GM12878 (cell line): ENCODE measurements at regions of chr15 and their contacts with region 1.

Region 1: GRCh38 chr15:91271565-91272153 is 171.6 kb downstream of the SV2B start:
- DNase-seq: peak; percentile 19
- ATAC-seq: peak; percentile 88
- H3K4me3 ChIP-seq: no peak overlapping the region
- H3K27ac ChIP-seq: no peak overlapping the region
- H3K4me1 ChIP-seq: no peaks in the 10 kb centered on the region
- H3K27me3 ChIP-seq: no peaks in the 10 kb centered on the region; a peak in 1 of 4 replicates
- CTCF ChIP-seq: peak; percentile 70 to 86 (median 72)
- EP300 ChIP-seq: no peak
- POLR2A ChIP-seq: no peak
- RAD21 ChIP-seq: peak; percentile 94

Region 2: DNA sequence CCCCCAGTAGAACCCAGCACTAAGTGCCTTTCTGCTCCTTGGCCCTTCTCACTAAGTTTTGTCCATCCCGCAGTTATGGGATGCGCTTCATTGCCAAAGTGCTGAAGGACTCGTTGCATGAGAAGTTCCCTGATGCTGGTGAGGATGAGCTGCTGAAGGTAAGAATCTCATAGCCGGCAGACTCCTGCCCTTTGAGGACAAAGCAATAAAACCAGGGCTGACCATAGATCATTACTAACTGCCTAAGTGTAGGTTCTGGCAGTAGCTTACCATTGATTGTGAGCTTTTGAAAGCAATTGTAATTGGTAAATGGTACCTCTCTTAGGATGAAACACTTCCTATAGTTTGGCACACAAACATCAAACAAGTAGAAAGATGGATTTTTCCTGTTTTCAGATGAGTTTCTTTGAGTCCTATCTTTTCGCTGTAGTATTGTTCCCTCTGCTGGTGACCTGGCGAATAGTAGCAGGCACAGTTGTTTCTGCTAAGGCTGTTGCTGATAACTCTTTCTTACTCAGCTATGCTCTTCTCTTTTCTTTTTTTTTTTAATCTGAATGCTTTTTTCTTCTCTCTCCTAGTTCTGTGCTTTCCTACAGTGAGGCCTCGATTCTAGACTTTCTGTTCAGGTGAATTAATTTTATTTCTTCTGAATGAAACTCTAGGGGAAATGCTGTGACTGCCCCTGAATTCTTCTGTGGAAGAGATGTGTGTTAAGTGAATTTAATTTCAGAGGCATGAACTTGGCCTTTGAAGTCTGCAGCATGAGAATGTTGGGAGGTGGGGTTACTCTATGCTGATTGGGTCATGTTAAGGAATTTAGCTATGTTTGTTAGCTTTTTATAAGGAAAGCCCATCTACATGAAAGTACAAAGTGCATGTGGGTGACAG is 789.3 kb before region 1 on chr15:
- CTCF ChIA-PET with region 1: no interaction called
- POLR2A ChIA-PET with region 1: no interaction called
- RAD21 ChIA-PET with region 1: no interaction called
- SMC1A ChIA-PET with region 1: no interaction called
- in situ Hi-C with region 1: no loop called
- intact Hi-C with region 1: loop called (anchors 10 kb)
- DNase-seq: no peak
- ATAC-seq: peak; percentile 69
- H3K4me3 ChIP-seq: no peak overlapping the region
- H3K27ac ChIP-seq: no peak overlapping the region
- H3K4me1 ChIP-seq: no peaks in the 10 kb centered on the region
- H3K27me3 ChIP-seq: no peaks in the 10 kb centered on the region
- CTCF ChIP-seq: peak; percentile 52 to 66 (median 53); a peak in 4 of 6 replicates
- EP300 ChIP-seq: no peak
- POLR2A ChIP-seq: no peak
- RAD21 ChIP-seq: peak; percentile 82

Region 3: DNA sequence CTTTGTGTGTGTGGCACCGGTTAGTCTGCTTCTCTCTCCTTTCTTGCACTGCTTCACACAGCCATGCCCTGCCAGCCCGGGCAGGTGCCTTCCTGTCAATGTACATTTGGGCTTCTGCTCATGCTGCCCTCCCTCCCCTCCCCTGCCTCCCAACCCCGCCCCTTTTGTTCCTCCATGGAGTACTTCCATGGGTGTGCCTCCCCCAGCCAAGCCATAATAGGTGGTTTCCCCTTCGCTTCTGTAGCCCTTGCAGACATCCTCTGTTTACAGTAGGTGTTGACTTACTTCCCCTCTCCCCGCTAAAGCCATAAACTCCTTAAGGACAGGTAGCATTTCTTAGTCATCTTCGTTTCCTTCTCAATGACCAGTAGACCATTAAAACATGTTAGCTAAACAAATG is 773.7 kb before region 1 on chr15:
- CTCF ChIA-PET with region 1: no interaction called
- POLR2A ChIA-PET with region 1: no interaction called
- RAD21 ChIA-PET with region 1: no interaction called
- SMC1A ChIA-PET with region 1: no interaction called
- in situ Hi-C with region 1: no loop called
- intact Hi-C with region 1: no loop called
- DNase-seq: no peak
- ATAC-seq: no peak
- H3K4me3 ChIP-seq: no peak overlapping the region
- H3K27ac ChIP-seq: no peak overlapping the region
- H3K4me1 ChIP-seq: no peaks in the 10 kb centered on the region
- H3K27me3 ChIP-seq: no peaks in the 10 kb centered on the region
- CTCF ChIP-seq: no peak
- EP300 ChIP-seq: no peak
- POLR2A ChIP-seq: no peak
- RAD21 ChIP-seq: no peak

Region 4: GRCh38 chr15:90982135-90982534 is 289.5 kb before region 1 on chr15:
- CTCF ChIA-PET with region 1: interaction called, 7 read pairs
- POLR2A ChIA-PET with region 1: no interaction called
- RAD21 ChIA-PET with region 1: interaction called, 6 read pairs
- SMC1A ChIA-PET with region 1: interaction called, 7 read pairs
- in situ Hi-C with region 1: no loop called
- intact Hi-C with region 1: loop called (anchors 10 kb)
- DNase-seq: no peak
- ATAC-seq: peak; percentile 75
- H3K4me3 ChIP-seq: no peak overlapping the region
- H3K27ac ChIP-seq: peak overlapping the region; percentile 79
- H3K4me1 ChIP-seq: peaks cover 27% of the 10 kb centered on the region
- H3K27me3 ChIP-seq: no peaks in the 10 kb centered on the region
- CTCF ChIP-seq: no peak
- EP300 ChIP-seq: no peak
- POLR2A ChIP-seq: no peak
- RAD21 ChIP-seq: no peak

Region 5: GRCh38 chr15:91055548-91056331 is 215.9 kb before region 1 on chr15:
- CTCF ChIA-PET with region 1: interaction called, 111 read pairs
- POLR2A ChIA-PET with region 1: no interaction called
- RAD21 ChIA-PET with region 1: interaction called, 36 read pairs
- SMC1A ChIA-PET with region 1: interaction called, 51 read pairs
- in situ Hi-C with region 1: loop called (anchors 5 kb)
- intact Hi-C with region 1: loop called (anchors 1 kb)
- DNase-seq: peak; percentile 11
- ATAC-seq: peak; percentile 85
- H3K4me3 ChIP-seq: no peak overlapping the region
- H3K27ac ChIP-seq: no peak overlapping the region
- H3K4me1 ChIP-seq: no peaks in the 10 kb centered on the region
- H3K27me3 ChIP-seq: no peaks in the 10 kb centered on the region; a peak in 2 of 4 replicates
- CTCF ChIP-seq: peak; percentile 76 to 80 (median 80)
- EP300 ChIP-seq: no peak
- POLR2A ChIP-seq: no peak
- RAD21 ChIP-seq: peak; percentile 94

Region 6: GRCh38 chr15:91246998-91247397 is 24.7 kb before region 1 on chr15:
- CTCF ChIA-PET with region 1: interaction called, 28 read pairs
- POLR2A ChIA-PET with region 1: no interaction called
- RAD21 ChIA-PET with region 1: interaction called, 3 read pairs
- SMC1A ChIA-PET with region 1: interaction called, 8 read pairs
- in situ Hi-C with region 1: no loop called
- intact Hi-C with region 1: no loop called
- DNase-seq: no peak
- ATAC-seq: no peak
- H3K4me3 ChIP-seq: no peak overlapping the region
- H3K27ac ChIP-seq: no peak overlapping the region
- H3K4me1 ChIP-seq: no peaks in the 10 kb centered on the region
- H3K27me3 ChIP-seq: no peaks in the 10 kb centered on the region
- CTCF ChIP-seq: no peak
- EP300 ChIP-seq: no peak
- POLR2A ChIP-seq: no peak
- RAD21 ChIP-seq: no peak

Region 7: GRCh38 chr15:91282486-91282885 is 10.8 kb after region 1 on chr15:
- CTCF ChIA-PET with region 1: interaction called, 17 read pairs
- POLR2A ChIA-PET with region 1: no interaction called
- RAD21 ChIA-PET with region 1: no interaction called
- SMC1A ChIA-PET with region 1: interaction called, 5 read pairs
- in situ Hi-C with region 1: no loop called
- intact Hi-C with region 1: no loop called
- DNase-seq: no peak
- ATAC-seq: no peak
- H3K4me3 ChIP-seq: no peak overlapping the region
- H3K27ac ChIP-seq: no peak overlapping the region
- H3K4me1 ChIP-seq: no peaks in the 10 kb centered on the region
- H3K27me3 ChIP-seq: no peaks in the 10 kb centered on the region; a peak in 2 of 4 replicates
- CTCF ChIP-seq: no peak
- EP300 ChIP-seq: no peak
- POLR2A ChIP-seq: no peak
- RAD21 ChIP-seq: no peak